K562 (cell line): ENCODE measurements at regions of chr1 and their contacts with region 1.

Region 1: DNA sequence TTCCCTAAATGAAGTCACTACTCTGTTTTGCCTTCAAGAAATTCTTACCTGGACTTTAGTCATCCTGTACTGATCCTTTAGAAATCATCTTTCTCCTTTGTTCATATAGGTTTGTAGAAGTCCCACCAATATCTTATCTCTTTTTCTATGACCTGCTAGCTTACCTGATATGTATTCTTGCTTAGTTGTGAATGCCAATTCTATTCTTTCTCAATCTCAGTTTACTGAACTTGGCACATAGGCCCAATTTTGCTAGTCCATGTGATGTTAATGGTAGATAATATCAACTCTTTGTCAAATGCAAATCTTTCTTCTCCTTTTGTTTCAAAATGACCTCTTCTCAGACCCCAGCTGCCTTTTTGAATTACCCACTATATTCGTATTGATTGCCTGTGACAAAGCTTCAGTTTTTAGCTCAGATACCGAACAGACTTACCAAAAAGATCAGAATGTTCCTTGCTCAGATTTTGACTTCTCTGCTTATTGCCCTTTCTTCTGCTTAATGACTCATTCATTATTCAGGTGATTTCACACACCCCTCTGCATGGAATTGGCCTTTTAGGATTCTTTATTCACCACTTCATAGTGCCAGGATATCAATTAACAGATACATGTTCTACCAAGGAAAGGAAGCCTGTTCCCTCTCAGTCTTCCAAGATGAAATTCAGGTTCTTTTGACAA is 20.6 kb downstream of the IPO9 start:
- DNase-seq: no peak
- ATAC-seq: no peak
- H3K4me3 ChIP-seq: no peak overlapping the region
- H3K27ac ChIP-seq: no peak overlapping the region
- H3K4me1 ChIP-seq: no peaks in the 10 kb centered on the region
- H3K27me3 ChIP-seq: no peaks in the 10 kb centered on the region
- CTCF ChIP-seq: no peak
- EP300 ChIP-seq: no peak
- POLR2A ChIP-seq: no peak
- RAD21 ChIP-seq: no peak

Region 2: GRCh38 chr1:201703621-201704439 is 145.7 kb before region 1 on chr1:
- CTCF ChIA-PET with region 1: no interaction called
- POLR2A ChIA-PET with region 1: no interaction called
- in situ Hi-C with region 1: no loop called
- intact Hi-C with region 1: no loop called
- DNase-seq: peak; percentile 90 to 96 (median 94)
- ATAC-seq: peak; percentile 98
- H3K4me3 ChIP-seq: no peak overlapping the region
- H3K27ac ChIP-seq: no peak overlapping the region
- H3K4me1 ChIP-seq: peaks cover 11 to 15% of the 10 kb centered on the region in 2 experiments
- H3K27me3 ChIP-seq: peaks cover 0 to 4% of the 10 kb centered on the region in 2 experiments; a peak in 1 of 5 replicates
- CTCF ChIP-seq: peak; percentile 98 to 99 (median 99)
- EP300 ChIP-seq: peak; percentile 21; the same call in 1 of the 2 replicates
- POLR2A ChIP-seq: no peak
- RAD21 ChIP-seq: peak; percentile 100

Region 3: DNA sequence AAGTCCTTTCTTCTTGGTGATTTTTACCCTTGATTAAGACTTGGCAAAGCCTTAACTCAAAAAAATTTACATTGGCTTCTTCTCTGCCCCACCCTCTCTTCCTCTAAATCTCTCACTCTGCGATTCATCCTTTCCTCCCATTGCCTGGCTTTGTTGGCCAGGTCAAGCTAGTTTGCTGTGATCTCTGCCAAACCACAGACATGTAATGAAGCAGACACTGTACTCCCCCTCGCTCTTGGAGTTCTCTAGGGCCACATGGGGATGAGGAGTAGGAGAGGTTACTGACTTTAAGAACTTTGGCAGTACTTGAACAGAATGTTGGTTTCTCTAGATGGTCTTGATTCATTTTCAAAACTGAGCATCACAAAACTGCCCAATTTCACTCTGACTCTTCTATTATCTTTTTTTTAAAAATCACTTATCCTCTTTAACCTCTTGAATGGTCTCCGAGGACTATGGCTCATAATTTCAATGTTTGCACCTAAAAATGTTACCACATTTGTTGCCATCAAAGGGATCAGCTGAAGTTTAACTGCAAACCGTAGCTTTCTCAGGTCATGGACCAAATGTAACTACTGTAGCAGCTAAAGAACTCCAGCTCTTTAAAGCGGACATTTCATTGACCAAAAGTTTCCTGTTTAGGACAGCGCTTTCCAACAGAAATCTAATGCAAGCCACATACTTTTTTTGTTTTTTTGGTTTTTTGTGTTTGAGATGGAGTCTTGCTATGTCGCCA is 83.2 kb before region 1 on chr1:
- CTCF ChIA-PET with region 1: no interaction called
- POLR2A ChIA-PET with region 1: no interaction called
- in situ Hi-C with region 1: no loop called
- intact Hi-C with region 1: no loop called
- DNase-seq: no peak
- ATAC-seq: peak; percentile 51; the same call in 1 of the 3 replicates
- H3K4me3 ChIP-seq: no peak overlapping the region
- H3K27ac ChIP-seq: no peak overlapping the region
- H3K4me1 ChIP-seq: no peaks in the 10 kb centered on the region; a peak in 1 of 5 replicates
- H3K27me3 ChIP-seq: no peaks in the 10 kb centered on the region; a peak in 2 of 5 replicates
- CTCF ChIP-seq: no peak
- EP300 ChIP-seq: no peak
- POLR2A ChIP-seq: no peak
- RAD21 ChIP-seq: no peak

Region 4: DNA sequence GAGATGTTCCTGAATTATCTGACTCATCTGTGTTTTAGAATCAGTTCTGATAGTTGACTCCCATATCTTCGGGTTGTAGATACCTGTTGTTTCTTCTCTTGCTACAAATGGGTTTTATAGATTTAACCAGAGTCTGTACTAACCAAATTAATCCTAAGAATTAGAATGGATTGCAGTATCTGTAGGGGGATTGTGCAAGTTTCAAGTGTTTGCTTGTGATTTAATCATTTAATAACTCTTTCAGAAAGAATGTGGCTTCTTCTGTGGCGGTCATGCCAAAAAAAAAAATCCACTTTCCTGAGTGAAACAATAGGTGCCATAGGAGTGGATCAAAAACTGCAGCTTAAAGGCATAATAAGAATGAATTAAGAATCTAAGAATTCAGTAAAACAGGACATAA is 11.1 kb before region 1 on chr1:
- CTCF ChIA-PET with region 1: no interaction called
- POLR2A ChIA-PET with region 1: interaction called, 10 read pairs
- in situ Hi-C with region 1: no loop called
- intact Hi-C with region 1: no loop called
- DNase-seq: no peak
- ATAC-seq: no peak
- H3K4me3 ChIP-seq: no peak overlapping the region
- H3K27ac ChIP-seq: peak overlapping the region; percentile 3; the same call in 1 of the 3 replicates
- H3K4me1 ChIP-seq: peaks cover 10 to 22% of the 10 kb centered on the region in 2 experiments; a peak in 4 of 5 replicates
- H3K27me3 ChIP-seq: no peaks in the 10 kb centered on the region
- CTCF ChIP-seq: no peak
- EP300 ChIP-seq: no peak
- POLR2A ChIP-seq: no peak
- RAD21 ChIP-seq: no peak